Activated CD8-positive, alpha-beta T cell treated with anti-CD3 and anti-CD28 coated beads for 36 hours (primary cell): ENCODE measurements at regions of chr6 and their contacts with region 1.

Region 1: GRCh38 chr6:35468181-35468979 is at the start of gene RPL10A:
- DNase-seq: peak; percentile 96
- ATAC-seq: peak; percentile 91
- H3K4me3 Mint-ChIP-seq: peak within 1 kb of the TSS; percentile 97
- H3K27ac Mint-ChIP-seq: peak within 1 kb of the TSS; percentile 98
- H3K4me1 Mint-ChIP-seq: peaks cover 38% of the 10 kb centered on the region
- H3K27me3 Mint-ChIP-seq: no peaks in the 10 kb centered on the region
- CTCF ChIP-seq: peak; percentile 85
- total RNA-seq, gene RPL10A: 2,322 to 2,393 TPM

Region 2: DNA sequence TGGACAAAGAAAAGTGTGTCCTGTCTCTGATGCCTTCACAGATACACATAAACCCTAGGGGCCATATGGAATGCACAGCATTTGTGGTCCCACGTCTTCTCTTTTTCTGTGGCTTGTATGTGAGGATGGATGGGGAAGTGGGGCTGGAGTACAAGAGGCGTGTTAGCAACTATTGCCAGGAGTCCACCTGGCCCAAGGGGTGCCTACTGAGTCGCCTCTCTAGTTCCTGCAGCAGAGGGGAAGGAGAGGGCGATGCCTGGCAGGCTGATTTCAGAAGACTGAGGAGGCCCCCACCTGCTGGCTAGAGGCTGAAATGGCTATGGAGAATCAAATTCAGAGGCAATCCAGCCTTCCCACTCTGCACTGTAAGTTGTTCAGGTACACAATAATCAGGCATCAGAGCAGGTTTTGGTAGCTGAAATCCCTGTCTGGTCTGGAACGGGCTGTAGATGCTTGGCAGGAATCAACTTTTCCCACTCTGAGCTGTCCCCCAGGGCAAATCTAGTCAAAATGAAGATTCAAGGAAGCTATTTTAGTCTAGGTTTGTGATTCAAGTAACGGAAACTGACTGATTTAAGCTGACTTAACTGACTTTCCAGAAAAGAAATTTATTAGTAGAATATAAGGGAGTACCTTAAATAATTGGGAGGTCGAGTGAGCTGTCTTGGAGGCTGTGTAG is 140.9 kb before region 1 on chr6:
- CTCF ChIA-PET with region 1: interaction called, 10 read pairs
- POLR2A ChIA-PET with region 1: interaction called, 4 read pairs
- intact Hi-C with region 1: no loop called
- DNase-seq: peak; percentile 88
- ATAC-seq: peak; percentile 95
- H3K4me3 Mint-ChIP-seq: no peak overlapping the region
- H3K27ac Mint-ChIP-seq: peak overlapping the region; percentile 68
- H3K4me1 Mint-ChIP-seq: peaks cover 18% of the 10 kb centered on the region
- H3K27me3 Mint-ChIP-seq: no peaks in the 10 kb centered on the region
- CTCF ChIP-seq: peak; percentile 76

Region 3: GRCh38 chr6:35342258-35343091 is 125.9 kb before region 1 on chr6 and contains the start of gene PPARD:
- CTCF ChIA-PET with region 1: interaction called, 27 read pairs
- POLR2A ChIA-PET with region 1: interaction called, 41 read pairs
- intact Hi-C with region 1: no loop called
- DNase-seq: peak; percentile 98
- ATAC-seq: peak; percentile 98
- H3K4me3 Mint-ChIP-seq: peak within 1 kb of the TSS; percentile 82
- H3K27ac Mint-ChIP-seq: peak within 1 kb of the TSS; percentile 91
- H3K4me1 Mint-ChIP-seq: peaks cover 40% of the 10 kb centered on the region
- H3K27me3 Mint-ChIP-seq: no peaks in the 10 kb centered on the region
- CTCF ChIP-seq: peak; percentile 95
- total RNA-seq, gene PPARD: 26.6 to 26.7 TPM

Region 4: DNA sequence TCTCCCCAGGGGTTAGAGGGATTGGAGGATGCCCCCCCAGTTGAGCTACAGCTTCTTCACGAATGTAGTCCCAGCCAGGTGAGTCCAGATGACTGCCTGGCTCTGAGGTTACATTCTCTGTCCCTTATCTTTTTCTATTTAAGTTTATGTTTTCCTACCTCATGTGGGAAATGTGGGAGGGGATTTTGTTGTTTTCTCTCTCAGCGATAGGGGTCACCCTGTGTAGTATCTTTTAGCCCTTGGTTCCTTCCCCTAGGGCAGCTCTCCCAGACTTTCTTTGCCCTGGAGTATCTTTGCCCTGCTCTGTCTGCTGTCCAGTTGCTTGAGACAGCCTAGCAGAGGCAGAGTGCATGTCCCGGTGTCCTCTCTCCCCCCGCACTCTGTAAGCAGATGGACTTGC is 10.5 kb before region 1 on chr6:
- CTCF ChIA-PET with region 1: interaction called, 35 read pairs
- POLR2A ChIA-PET with region 1: interaction called, 70 read pairs
- intact Hi-C with region 1: no loop called
- DNase-seq: no peak
- ATAC-seq: no peak
- H3K4me3 Mint-ChIP-seq: no peak overlapping the region
- H3K27ac Mint-ChIP-seq: no peak overlapping the region
- H3K4me1 Mint-ChIP-seq: peaks cover 25% of the 10 kb centered on the region
- H3K27me3 Mint-ChIP-seq: no peaks in the 10 kb centered on the region
- CTCF ChIP-seq: no peak

Region 5: DNA sequence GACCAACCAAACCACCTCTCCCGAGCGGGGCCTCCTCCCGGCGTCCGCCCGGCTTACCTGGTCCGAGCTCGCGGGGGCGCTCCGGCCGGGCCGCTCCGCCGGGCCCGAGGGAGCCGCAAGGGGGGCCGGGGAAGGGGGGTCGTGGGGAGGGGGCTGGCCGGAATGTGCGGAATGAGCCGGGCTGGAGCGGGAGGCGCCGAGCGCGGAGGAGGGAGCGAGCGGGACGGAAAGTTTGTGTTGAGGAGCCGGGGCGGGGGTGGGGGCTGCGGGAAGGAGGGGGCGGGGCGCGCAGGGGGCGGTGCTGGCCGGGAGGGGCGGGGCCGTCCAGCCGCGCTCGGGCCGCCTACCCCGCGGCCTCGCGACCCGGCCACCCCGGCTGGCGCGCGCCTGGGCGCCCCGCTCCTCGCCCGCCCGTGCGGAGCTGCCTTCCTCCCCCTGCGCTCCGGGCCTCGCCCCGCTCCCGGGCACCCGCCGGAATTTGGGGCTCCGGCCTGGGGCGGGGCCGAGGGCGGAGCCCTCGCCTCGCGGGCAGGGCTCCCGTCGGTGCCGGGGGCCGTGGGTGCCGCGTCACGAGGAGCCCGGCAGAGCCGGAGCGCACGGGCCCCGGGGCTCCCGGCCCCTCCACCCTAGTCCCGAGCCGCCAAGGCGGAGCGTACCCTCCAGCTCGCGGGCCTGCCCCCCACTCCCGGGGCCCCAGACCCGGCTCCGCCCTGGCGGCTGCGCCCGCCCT is 28.6 kb after region 1 on chr6 and contains the start of gene TEAD3:
- CTCF ChIA-PET with region 1: interaction called, 3 read pairs
- POLR2A ChIA-PET with region 1: interaction called, 327 read pairs
- intact Hi-C with region 1: no loop called
- DNase-seq: peak; percentile 48
- ATAC-seq: peak; percentile 74
- H3K4me3 Mint-ChIP-seq: peak within 1 kb of the TSS; percentile 72
- H3K27ac Mint-ChIP-seq: peak within 1 kb of the TSS; percentile 75
- H3K4me1 Mint-ChIP-seq: peaks cover 14% of the 10 kb centered on the region
- H3K27me3 Mint-ChIP-seq: peaks cover 11% of the 10 kb centered on the region
- CTCF ChIP-seq: no peak
- total RNA-seq, gene TEAD3: 0.68 to 0.81 TPM

Region 6: GRCh38 chr6:36820700-36821580 is 1352.6 kb after region 1 on chr6:
- CTCF ChIA-PET with region 1: no interaction called
- POLR2A ChIA-PET with region 1: no interaction called
- intact Hi-C with region 1: no loop called
- DNase-seq: no peak
- ATAC-seq: no peak
- H3K4me3 Mint-ChIP-seq: no peak overlapping the region
- H3K27ac Mint-ChIP-seq: no peak overlapping the region
- H3K4me1 Mint-ChIP-seq: no peaks in the 10 kb centered on the region
- H3K27me3 Mint-ChIP-seq: no peaks in the 10 kb centered on the region
- CTCF ChIP-seq: no peak